ENCODE measurements at regions of chr6 and their contacts with region 1.

Region 1: DNA sequence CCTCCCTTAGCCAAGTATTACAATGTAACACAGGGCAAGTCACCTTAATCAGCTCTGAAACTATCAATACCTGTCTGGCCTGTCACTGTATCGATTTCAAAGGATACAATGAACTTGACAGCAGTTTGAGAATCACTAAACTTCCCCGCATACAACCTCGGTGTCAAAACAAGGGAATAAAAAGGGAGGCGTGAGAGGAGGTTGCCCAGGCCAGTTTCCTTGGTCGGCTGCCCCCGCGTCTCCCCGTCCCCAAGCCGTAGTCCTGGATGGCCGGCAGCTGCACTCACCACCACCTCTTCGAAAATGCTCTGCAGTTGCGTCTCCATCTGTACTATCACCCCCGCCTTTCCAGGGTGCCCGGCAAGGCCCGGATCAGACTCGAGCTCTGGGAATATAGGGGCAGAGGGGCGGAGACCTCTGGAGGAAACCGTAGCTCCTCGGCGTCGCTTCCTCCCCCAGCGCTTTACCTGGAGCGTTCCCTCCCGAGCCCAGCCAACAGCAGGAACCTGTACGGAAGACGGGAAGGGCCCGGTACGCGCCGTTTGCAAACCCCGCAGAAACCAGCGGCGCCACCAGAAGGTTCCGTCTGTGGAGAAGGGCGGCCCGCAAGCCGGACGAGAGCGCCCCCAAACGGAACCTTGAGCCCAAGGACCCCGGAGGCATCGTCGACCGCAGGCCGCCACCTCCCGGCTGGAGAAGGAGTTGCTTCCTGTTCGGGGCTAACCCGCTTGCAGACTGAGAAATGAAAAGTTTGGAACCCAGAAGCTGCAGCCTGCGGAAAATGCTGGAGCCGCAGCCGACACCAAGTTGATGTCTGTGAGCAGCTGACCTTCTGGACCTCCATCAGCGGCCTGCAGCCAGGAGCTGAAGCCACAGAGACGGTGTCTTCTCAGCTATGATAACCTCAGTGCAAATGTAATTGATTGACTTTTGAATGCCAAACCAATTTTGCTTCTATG is at the start of gene MED23:
- DNase-seq: peak; percentile 94
- H3K4me3 Mint-ChIP-seq: peak within 1 kb of the TSS; percentile 93
- H3K27ac Mint-ChIP-seq: peak within 1 kb of the TSS; percentile 96
- H3K4me1 Mint-ChIP-seq: peaks cover 13% of the 10 kb centered on the region
- H3K27me3 Mint-ChIP-seq: no peaks in the 10 kb centered on the region
- CTCF ChIP-seq: peak; percentile 97
- total RNA-seq, gene MED23: 20.6 and 25.0 TPM in 2 replicates

Region 2: GRCh38 chr6:131602781-131603312 is 25.2 kb before region 1 on chr6:
- CTCF ChIA-PET with region 1: interaction called, 19 read pairs
- POLR2A ChIA-PET with region 1: interaction called, 5 read pairs
- intact Hi-C with region 1: no loop called
- DNase-seq: peak; percentile 45
- H3K4me3 Mint-ChIP-seq: no peak overlapping the region
- H3K27ac Mint-ChIP-seq: no peak overlapping the region
- H3K4me1 Mint-ChIP-seq: no peaks in the 10 kb centered on the region
- H3K27me3 Mint-ChIP-seq: no peaks in the 10 kb centered on the region
- CTCF ChIP-seq: no peak

Region 3: DNA sequence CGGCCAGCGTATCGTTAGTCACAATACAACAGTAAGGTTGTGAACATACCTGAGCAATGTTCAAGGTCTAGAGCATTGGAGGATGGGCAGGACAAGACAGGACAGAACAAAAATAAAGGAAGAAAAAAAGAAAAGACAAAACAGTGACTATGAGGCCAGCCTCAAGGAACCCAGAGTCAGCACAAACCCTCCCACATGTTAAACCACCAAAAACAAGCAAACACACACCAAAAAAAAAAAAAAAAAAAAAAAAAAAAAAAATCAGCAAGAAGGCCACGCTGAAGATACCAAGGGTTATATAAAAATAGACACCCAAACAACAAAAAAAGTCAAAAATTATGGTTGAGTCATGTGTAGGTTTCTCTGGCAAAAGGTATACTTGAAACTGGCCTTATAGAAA is 12.7 kb before region 1 on chr6:
- CTCF ChIA-PET with region 1: interaction called, 21 read pairs
- POLR2A ChIA-PET with region 1: interaction called, 7 read pairs
- intact Hi-C with region 1: no loop called
- DNase-seq: no peak
- H3K4me3 Mint-ChIP-seq: no peak overlapping the region
- H3K27ac Mint-ChIP-seq: no peak overlapping the region
- H3K4me1 Mint-ChIP-seq: no peaks in the 10 kb centered on the region
- H3K27me3 Mint-ChIP-seq: no peaks in the 10 kb centered on the region
- CTCF ChIP-seq: no peak

Region 4: GRCh38 chr6:131640100-131640499 is 12.1 kb after region 1 on chr6:
- CTCF ChIA-PET with region 1: interaction called, 34 read pairs
- POLR2A ChIA-PET with region 1: interaction called, 7 read pairs
- intact Hi-C with region 1: no loop called
- DNase-seq: no peak
- H3K4me3 Mint-ChIP-seq: no peak overlapping the region
- H3K27ac Mint-ChIP-seq: no peak overlapping the region
- H3K4me1 Mint-ChIP-seq: no peaks in the 10 kb centered on the region
- H3K27me3 Mint-ChIP-seq: peaks cover 12% of the 10 kb centered on the region
- CTCF ChIP-seq: no peak

Region 5: GRCh38 chr6:131652472-131652871 is 24.5 kb after region 1 on chr6:
- CTCF ChIA-PET with region 1: interaction called, 16 read pairs
- POLR2A ChIA-PET with region 1: interaction called, 3 read pairs
- intact Hi-C with region 1: no loop called
- DNase-seq: peak; percentile 21
- H3K4me3 Mint-ChIP-seq: no peak overlapping the region
- H3K27ac Mint-ChIP-seq: no peak overlapping the region
- H3K4me1 Mint-ChIP-seq: peaks cover 6% of the 10 kb centered on the region
- H3K27me3 Mint-ChIP-seq: no peaks in the 10 kb centered on the region
- CTCF ChIP-seq: no peak

Region 6: GRCh38 chr6:131660195-131660594 is 32.2 kb after region 1 on chr6:
- CTCF ChIA-PET with region 1: interaction called, 15 read pairs
- POLR2A ChIA-PET with region 1: interaction called, 3 read pairs
- intact Hi-C with region 1: no loop called
- DNase-seq: peak; percentile 52
- H3K4me3 Mint-ChIP-seq: no peak overlapping the region
- H3K27ac Mint-ChIP-seq: no peak overlapping the region
- H3K4me1 Mint-ChIP-seq: peaks cover 8% of the 10 kb centered on the region
- H3K27me3 Mint-ChIP-seq: no peaks in the 10 kb centered on the region
- CTCF ChIP-seq: no peak